ENCODE measurements at regions of chr1 and their contacts with region 1.

Region 1: DNA sequence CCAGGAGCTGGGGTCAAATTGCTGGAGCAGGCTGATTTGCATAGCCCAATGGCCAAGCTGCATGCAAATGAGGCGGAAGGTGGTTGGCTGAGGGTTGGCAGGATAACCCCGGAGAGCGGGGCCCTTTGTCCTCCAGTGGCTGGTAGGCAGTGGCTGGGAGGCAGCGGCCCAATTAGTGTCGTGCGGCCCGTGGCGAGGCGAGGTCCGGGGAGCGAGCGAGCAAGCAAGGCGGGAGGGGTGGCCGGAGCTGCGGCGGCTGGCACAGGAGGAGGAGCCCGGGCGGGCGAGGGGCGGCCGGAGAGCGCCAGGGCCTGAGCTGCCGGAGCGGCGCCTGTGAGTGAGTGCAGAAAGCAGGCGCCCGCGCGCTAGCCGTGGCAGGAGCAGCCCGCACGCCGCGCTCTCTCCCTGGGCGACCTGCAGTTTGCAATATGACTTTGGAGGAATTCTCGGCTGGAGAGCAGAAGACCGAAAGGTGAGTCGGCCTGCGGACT is at the start of gene GADD45A:
- DNase-seq: peak; percentile 99
- ATAC-seq: peak; percentile 74
- H3K4me3 ChIP-seq: peak within 1 kb of the TSS; percentile 87
- H3K27ac ChIP-seq: peak within 1 kb of the TSS; percentile 93
- H3K4me1 ChIP-seq: peaks cover 53% of the 10 kb centered on the region
- H3K27me3 ChIP-seq: no peaks in the 10 kb centered on the region
- CTCF ChIP-seq: no peak
- total RNA-seq, gene GADD45A: 129 and 153 TPM in 2 replicates

Region 2: DNA sequence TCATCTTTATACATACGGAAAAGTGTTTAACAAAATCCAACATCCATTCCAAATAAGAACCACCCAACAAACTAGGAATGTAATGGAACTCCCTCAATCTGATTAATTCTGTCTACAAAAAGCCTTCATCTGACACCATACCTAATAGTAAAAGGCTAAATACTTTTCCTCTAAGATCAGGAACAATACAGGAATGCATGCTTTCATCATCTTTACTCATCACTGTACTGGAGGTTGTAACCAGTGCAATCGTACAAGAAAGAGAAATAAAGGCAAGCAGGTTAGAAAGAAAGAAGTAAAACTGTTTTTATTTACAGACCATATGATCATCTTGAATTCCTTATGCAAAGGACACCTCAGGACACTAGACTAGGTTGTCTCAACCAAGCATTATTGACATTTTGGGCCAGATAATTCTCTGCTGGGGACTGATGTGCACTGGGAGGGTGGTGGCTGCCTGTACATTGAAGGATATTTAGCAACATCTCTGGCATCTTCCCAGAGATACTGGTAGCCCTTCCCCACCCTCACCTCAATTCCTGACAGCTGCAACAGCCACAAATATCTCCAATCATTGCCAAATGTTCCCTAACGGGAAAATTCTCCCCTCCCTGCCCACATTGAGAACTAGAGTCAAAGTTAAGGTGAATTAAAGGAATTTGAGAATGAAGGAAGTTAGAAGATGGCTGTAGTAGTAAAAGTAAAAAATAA is 853.4 kb before region 1 on chr1:
- CTCF ChIA-PET with region 1: no interaction called
- POLR2A ChIA-PET with region 1: no interaction called
- intact Hi-C with region 1: no loop called
- DNase-seq: no peak
- ATAC-seq: no peak
- H3K4me3 ChIP-seq: no peak overlapping the region
- H3K27ac ChIP-seq: no peak overlapping the region
- H3K4me1 ChIP-seq: no peaks in the 10 kb centered on the region
- H3K27me3 ChIP-seq: peaks cover 4% of the 10 kb centered on the region; the same call in 1 of the 2 replicates
- CTCF ChIP-seq: no peak

Region 3: DNA sequence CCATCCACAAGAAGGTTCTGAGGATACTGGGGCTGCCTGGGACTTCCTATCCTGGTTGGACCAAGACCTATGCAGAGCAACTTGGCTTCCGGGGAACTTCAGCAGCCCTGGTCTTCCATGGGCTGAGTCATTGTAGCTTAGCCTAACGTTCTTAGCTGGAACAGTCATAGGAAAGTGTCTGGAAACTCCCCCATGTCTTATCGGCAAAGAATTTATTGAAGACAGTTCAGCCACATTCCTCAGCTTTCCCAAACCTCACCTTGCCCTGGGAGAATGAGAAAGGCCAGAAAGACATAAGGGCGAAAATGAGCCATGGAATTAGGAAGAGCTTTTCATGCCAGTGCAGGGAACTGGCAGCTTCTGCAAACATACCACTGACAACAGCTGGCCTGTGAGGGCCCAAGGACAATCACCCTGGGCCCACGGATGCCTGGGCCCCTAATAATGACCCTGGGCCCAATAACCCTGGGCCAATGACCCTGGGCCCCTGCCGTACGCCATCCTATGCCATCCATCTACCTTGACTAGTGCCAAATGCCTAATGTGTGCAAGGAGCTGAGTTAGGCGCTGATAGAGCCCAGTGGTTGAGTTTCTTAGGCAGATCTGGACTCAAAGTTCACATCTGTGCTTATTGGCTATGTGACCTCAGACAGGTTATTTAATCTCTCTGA is 114.5 kb before region 1 on chr1:
- CTCF ChIA-PET with region 1: interaction called, 3 read pairs
- POLR2A ChIA-PET with region 1: interaction called, 14 read pairs
- intact Hi-C with region 1: no loop called
- DNase-seq: peak; percentile 96
- ATAC-seq: peak; percentile 96
- H3K4me3 ChIP-seq: no peak overlapping the region
- H3K27ac ChIP-seq: peak overlapping the region; percentile 90
- H3K4me1 ChIP-seq: peaks cover 40% of the 10 kb centered on the region
- H3K27me3 ChIP-seq: no peaks in the 10 kb centered on the region
- CTCF ChIP-seq: no peak

Region 4: DNA sequence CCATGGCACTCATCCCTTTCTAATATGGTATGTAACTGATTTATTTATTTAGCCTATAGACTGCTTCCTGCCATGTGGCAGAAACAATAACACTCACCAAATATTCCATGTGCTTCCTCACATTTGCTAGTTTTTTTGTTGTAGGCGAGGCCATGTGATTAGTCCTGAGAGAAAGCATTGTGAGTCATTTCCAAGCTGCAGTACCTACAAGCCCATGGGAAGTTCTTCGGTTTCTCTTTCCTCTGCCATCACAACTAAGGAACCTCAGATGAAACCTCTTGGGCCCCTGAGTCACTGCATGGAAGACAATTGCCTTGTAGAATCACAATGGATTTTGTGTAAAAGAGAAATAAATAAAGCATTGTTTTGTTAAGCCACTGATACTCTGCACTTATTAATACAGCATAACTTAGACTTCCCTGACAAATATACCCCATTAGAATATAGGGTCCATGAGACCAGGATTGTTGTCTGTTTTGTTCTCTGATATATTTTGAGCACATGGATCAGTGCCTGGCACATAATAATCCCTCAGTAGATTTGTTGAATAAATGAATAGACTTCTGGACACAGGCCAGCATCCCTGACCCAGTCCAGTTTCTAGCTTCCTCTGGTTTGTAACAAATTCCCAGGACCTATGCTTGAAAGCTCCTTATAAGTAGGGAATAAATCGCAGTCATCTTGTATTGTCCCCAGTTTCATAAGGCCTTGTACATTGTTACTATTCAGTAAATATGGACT is 58.4 kb before region 1 on chr1:
- CTCF ChIA-PET with region 1: interaction called, 4 read pairs
- POLR2A ChIA-PET with region 1: interaction called, 23 read pairs
- intact Hi-C with region 1: no loop called
- DNase-seq: peak; percentile 81
- ATAC-seq: peak; percentile 64
- H3K4me3 ChIP-seq: no peak overlapping the region
- H3K27ac ChIP-seq: peak overlapping the region; percentile 83
- H3K4me1 ChIP-seq: peaks cover 54% of the 10 kb centered on the region
- H3K27me3 ChIP-seq: no peaks in the 10 kb centered on the region
- CTCF ChIP-seq: no peak

Region 5: GRCh38 chr1:67749844-67750689 is 65.0 kb after region 1 on chr1:
- CTCF ChIA-PET with region 1: no interaction called
- POLR2A ChIA-PET with region 1: interaction called, 15 read pairs
- intact Hi-C with region 1: loop called (anchors 1 kb)
- DNase-seq: peak; percentile 91
- ATAC-seq: peak; percentile 91
- H3K4me3 ChIP-seq: peak overlapping the region; percentile 53
- H3K27ac ChIP-seq: peak overlapping the region; percentile 96
- H3K4me1 ChIP-seq: peaks cover 72% of the 10 kb centered on the region
- H3K27me3 ChIP-seq: no peaks in the 10 kb centered on the region
- CTCF ChIP-seq: no peak

Region 6: DNA sequence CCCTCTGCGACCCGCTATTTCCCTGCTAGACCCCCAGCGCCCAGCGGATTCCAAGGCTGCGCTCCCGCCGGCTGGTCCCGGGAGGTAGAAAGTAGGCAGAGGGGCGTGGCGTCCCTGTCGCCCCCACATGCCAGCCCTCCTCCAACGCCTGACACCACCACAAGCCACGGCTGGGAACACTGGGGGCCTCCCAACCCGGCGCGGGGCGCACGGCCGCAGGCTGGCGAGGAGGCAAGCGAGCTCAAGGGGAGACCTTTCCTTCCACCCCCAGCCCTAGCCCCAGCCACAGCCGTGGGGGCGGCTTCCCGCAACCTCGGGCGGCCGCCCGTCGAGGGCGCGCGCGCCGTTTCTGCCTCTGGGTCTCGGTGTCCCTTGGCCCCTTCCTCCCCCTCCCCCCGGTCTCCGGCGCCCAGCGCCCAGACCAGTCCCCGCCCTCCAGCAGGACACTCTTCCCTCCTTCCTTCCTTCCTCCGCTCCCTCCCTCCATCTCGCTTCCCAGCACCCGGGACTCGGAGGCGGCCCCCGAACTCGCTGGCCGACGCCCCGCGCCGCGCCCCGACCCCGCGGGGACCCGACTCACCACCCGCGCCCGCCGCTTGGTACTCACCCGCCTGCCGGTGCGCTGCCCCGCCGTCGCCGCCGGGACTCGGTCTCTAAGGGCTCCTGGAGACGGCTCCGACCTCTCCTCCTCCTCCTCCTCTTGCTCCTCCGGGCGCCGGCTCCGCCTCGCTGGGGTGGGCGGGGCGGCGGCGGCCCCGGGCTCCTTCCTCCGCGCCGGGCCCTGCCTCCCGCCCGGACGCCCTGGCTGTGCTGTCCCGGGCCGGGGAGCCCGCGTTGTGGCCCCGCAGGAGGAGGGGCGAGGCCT is 147.9 kb after region 1 on chr1 and contains the start of gene GNG12:
- CTCF ChIA-PET with region 1: no interaction called
- POLR2A ChIA-PET with region 1: interaction called, 13 read pairs
- intact Hi-C with region 1: loop called (anchors 1 kb)
- DNase-seq: peak; percentile 79
- ATAC-seq: peak; percentile 72
- H3K4me3 ChIP-seq: peak within 1 kb of the TSS; percentile 84
- H3K27ac ChIP-seq: peak within 1 kb of the TSS; percentile 81
- H3K4me1 ChIP-seq: peaks cover 21% of the 10 kb centered on the region
- H3K27me3 ChIP-seq: no peaks in the 10 kb centered on the region
- CTCF ChIP-seq: no peak
- total RNA-seq, gene GNG12: 54.1 and 66.1 TPM in 2 replicates

Region 7: GRCh38 chr1:67916140-67916886 is 231.2 kb after region 1 on chr1:
- CTCF ChIA-PET with region 1: no interaction called
- POLR2A ChIA-PET with region 1: no interaction called
- intact Hi-C with region 1: no loop called
- DNase-seq: no peak
- ATAC-seq: no peak
- H3K4me3 ChIP-seq: no peak overlapping the region
- H3K27ac ChIP-seq: no peak overlapping the region
- H3K4me1 ChIP-seq: no peaks in the 10 kb centered on the region
- H3K27me3 ChIP-seq: no peaks in the 10 kb centered on the region
- CTCF ChIP-seq: no peak